Activated naive CD4-positive, alpha-beta T cell treated with anti-CD3 and anti-CD28 coated beads, Interleukin-2, amount 10 ng/mL, durations not matched to agents 7 days and 5 days (primary cell): ENCODE measurements at regions of chr9 and their contacts with region 1.

Region 1: GRCh38 chr9:613771-614347 is 227.6 kb upstream of the DMRT1 start:
- DNase-seq: peak; percentile 46
- H3K4me3 Mint-ChIP-seq: no peak overlapping the region
- H3K27ac Mint-ChIP-seq: no peak overlapping the region
- H3K4me1 Mint-ChIP-seq: peaks cover 5% of the 10 kb centered on the region
- H3K27me3 Mint-ChIP-seq: no peaks in the 10 kb centered on the region

Region 2: GRCh38 chr9:763692-764524 is 150.0 kb after region 1 on chr9:
- CTCF ChIA-PET with region 1: interaction called, 138 read pairs
- DNase-seq: peak; percentile 66
- H3K4me3 Mint-ChIP-seq: no peak overlapping the region
- H3K27ac Mint-ChIP-seq: no peak overlapping the region
- H3K4me1 Mint-ChIP-seq: peaks cover 14% of the 10 kb centered on the region
- H3K27me3 Mint-ChIP-seq: peaks cover 44% of the 10 kb centered on the region